AG04450 (cell line): ENCODE measurements at regions of chr12 and their contacts with region 1.

Region 1: GRCh38 chr12:53352331-53353256 is 16.4 kb upstream of the SP7 start:
- DNase-seq: peak; percentile 68
- H3K4me3 ChIP-seq: no peak overlapping the region
- H3K27ac ChIP-seq: no peak overlapping the region
- H3K27me3 ChIP-seq: no peaks in the 10 kb centered on the region
- CTCF ChIP-seq: peak; percentile 88

Region 2: DNA sequence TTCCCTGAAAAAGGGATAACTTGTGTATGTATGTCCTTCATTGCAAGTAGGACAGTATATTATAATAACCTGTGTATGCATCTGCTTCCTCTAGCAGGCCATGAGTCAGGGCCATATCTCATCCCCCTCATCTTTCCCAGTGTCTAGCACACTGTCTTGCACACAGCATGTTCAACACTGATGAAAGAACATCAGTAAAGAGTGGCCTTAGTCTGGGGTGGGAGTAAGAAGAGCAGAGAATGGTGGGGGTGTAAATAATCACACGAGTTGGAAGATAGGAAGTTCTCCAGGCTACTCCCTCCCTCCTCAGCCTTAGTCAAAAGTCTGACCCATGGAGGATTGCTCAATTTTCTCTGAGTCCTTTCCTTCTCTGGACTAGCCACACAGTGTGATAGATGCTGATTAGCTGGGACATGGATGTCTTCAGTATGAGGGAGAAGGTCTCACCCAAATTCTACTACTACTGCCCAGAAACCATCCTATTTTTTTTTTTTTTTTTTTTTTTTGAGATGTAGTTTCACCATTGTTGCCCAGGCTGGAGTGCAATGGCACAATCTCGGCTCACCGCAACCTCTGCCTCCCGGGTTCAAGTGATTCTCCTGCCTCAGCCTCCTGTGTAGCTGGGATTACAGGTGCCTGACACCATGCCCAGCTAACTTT is 12.8 kb after region 1 on chr12:
- CTCF ChIA-PET with region 1: interaction called, 24 read pairs
- POLR2A ChIA-PET with region 1: no interaction called
- DNase-seq: no peak
- H3K4me3 ChIP-seq: no peak overlapping the region
- H3K27ac ChIP-seq: no peak overlapping the region
- H3K27me3 ChIP-seq: no peaks in the 10 kb centered on the region
- CTCF ChIP-seq: no peak

Region 3: GRCh38 chr12:53389702-53390101 is 37.1 kb after region 1 on chr12:
- CTCF ChIA-PET with region 1: interaction called, 15 read pairs
- POLR2A ChIA-PET with region 1: no interaction called
- DNase-seq: no peak
- H3K4me3 ChIP-seq: no peak overlapping the region
- H3K27ac ChIP-seq: no peak overlapping the region
- H3K27me3 ChIP-seq: no peaks in the 10 kb centered on the region
- CTCF ChIP-seq: no peak

Region 4: GRCh38 chr12:53414756-53415417 is 62.3 kb after region 1 on chr12:
- CTCF ChIA-PET with region 1: interaction called, 325 read pairs
- POLR2A ChIA-PET with region 1: interaction called, 7 read pairs
- DNase-seq: no peak
- H3K4me3 ChIP-seq: no peak overlapping the region
- H3K27ac ChIP-seq: no peak overlapping the region
- H3K27me3 ChIP-seq: no peaks in the 10 kb centered on the region
- CTCF ChIP-seq: no peak

Region 5: DNA sequence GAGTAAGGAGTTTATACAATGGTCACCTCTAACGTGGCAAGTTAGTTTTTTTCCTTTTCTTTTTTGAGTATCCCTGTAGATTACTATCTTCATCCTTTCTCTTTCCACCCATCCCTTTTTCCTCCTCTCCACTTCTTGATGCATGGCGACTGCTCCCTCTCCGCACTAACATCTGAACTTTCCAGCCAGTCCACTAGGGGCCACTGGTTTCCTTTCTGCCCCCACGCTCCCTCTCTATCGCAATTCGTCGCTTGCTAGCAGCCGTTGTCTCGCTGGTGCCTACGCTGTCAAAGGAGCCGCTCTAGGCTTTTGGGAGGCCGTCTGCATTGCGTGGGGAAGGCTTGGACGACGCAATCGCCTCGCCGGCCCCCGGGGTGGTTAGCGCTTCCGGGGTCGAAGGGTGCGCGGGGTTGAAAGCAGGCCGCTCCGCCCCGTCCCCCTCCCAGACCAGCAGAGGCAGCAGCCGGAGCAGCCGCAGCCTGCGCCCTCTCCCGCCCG is 99.1 kb after region 1 on chr12 and contains the start of gene PCBP2:
- CTCF ChIA-PET with region 1: interaction called, 20 read pairs
- POLR2A ChIA-PET with region 1: no interaction called
- DNase-seq: peak; percentile 99
- H3K4me3 ChIP-seq: peak within 1 kb of the TSS; percentile 90
- H3K27ac ChIP-seq: peak within 1 kb of the TSS; percentile 94
- H3K27me3 ChIP-seq: no peaks in the 10 kb centered on the region
- CTCF ChIP-seq: peak; percentile 92
- polyA plus RNA-seq, gene PCBP2: 286 and 408 TPM in 2 replicates

Region 6: GRCh38 chr12:53508534-53509199 is 156.1 kb after region 1 on chr12:
- CTCF ChIA-PET with region 1: interaction called, 44 read pairs
- POLR2A ChIA-PET with region 1: interaction called, 3 read pairs
- DNase-seq: peak; percentile 46
- H3K4me3 ChIP-seq: no peak overlapping the region
- H3K27ac ChIP-seq: no peak overlapping the region
- H3K27me3 ChIP-seq: no peaks in the 10 kb centered on the region
- CTCF ChIP-seq: peak; percentile 93